ENCODE measurements at regions of chr1 and their contacts with region 1.

Region 1: GRCh38 chr1:226062558-226063223 is at the start of gene H3-3A:
- DNase-seq: peak; percentile 90
- ATAC-seq: peak; percentile 88
- H3K4me3 ChIP-seq: peak within 1 kb of the TSS; percentile 95
- H3K27ac ChIP-seq: peak within 1 kb of the TSS; percentile 97
- H3K4me1 ChIP-seq: peaks cover 2% of the 10 kb centered on the region
- H3K27me3 ChIP-seq: no peaks in the 10 kb centered on the region
- CTCF ChIP-seq: no peak
- POLR2A ChIP-seq: peak; percentile 92
- RAD21 ChIP-seq: no peak
- total RNA-seq, gene H3-3A: 171 and 188 TPM in 2 replicates

Region 2: DNA sequence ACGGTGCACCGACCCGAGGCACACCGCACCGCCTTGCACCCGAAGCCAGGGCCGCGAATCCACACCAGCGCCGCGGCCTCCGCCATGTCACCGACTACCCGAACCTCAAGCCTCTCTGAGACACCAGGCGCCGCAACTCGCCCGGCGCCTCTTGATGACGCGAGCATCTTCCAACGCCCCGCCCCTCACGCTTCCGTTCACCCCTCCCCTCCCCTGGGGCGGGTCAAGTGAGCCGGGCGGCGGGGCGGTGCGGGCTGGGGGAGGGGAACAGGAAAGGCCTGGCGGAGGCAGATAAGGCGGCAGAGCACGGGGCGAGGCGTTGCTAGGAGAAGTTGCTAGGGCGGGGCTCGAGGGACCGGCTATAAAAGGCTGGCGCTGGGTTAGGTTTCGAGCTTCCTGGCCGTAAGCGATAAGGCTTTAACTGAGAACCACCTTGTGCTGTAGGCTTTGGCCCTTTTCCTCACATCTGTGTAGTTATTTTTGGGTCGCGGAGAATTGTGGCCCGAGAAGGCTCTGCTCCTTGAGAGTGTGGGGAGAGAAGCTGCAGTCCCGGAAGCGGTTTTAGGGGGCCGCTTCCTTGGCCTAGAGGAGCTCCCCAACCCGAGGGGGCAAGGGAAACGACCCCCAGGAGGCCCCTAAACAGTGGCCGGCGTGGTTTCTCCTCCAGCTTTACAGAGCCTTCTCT is 63.3 kb before region 1 on chr1 and contains the start of gene SDE2:
- CTCF ChIA-PET with region 1: interaction called, 6 read pairs
- POLR2A ChIA-PET with region 1: no interaction called
- dilution Hi-C with region 1: no loop called
- in situ Hi-C with region 1: no loop called
- intact Hi-C with region 1: loop called (anchors 2 kb)
- DNase-seq: peak; percentile 98
- ATAC-seq: peak; percentile 100
- H3K4me3 ChIP-seq: peak within 1 kb of the TSS; percentile 92
- H3K27ac ChIP-seq: peak within 1 kb of the TSS; percentile 93
- H3K4me1 ChIP-seq: peaks cover 7% of the 10 kb centered on the region; the same call in 1 of the 2 replicates
- H3K27me3 ChIP-seq: no peaks in the 10 kb centered on the region
- CTCF ChIP-seq: no peak
- POLR2A ChIP-seq: peak; percentile 97
- RAD21 ChIP-seq: no peak
- total RNA-seq, gene SDE2: 14.7 and 29.4 TPM in 2 replicates

Region 3: GRCh38 chr1:226083302-226084101 is 20.8 kb after region 1 on chr1:
- CTCF ChIA-PET with region 1: interaction called, 8 read pairs
- POLR2A ChIA-PET with region 1: interaction called, 20 read pairs
- dilution Hi-C with region 1: no loop called
- in situ Hi-C with region 1: no loop called
- intact Hi-C with region 1: no loop called
- DNase-seq: peak; percentile 60
- ATAC-seq: peak; percentile 97
- H3K4me3 ChIP-seq: peak overlapping the region; percentile 66
- H3K27ac ChIP-seq: peak overlapping the region; percentile 53
- H3K4me1 ChIP-seq: no peaks in the 10 kb centered on the region
- H3K27me3 ChIP-seq: no peaks in the 10 kb centered on the region
- CTCF ChIP-seq: no peak
- POLR2A ChIP-seq: no peak
- RAD21 ChIP-seq: no peak

Region 4: GRCh38 chr1:226109829-226110248 is 47.1 kb after region 1 on chr1:
- CTCF ChIA-PET with region 1: interaction called, 9 read pairs
- POLR2A ChIA-PET with region 1: no interaction called
- dilution Hi-C with region 1: no loop called
- in situ Hi-C with region 1: no loop called
- intact Hi-C with region 1: loop called (anchors 2 kb)
- DNase-seq: peak; percentile 70
- ATAC-seq: peak; percentile 93
- H3K4me3 ChIP-seq: peak overlapping the region; percentile 57
- H3K27ac ChIP-seq: peak overlapping the region; percentile 69
- H3K4me1 ChIP-seq: peaks cover 4% of the 10 kb centered on the region; the same call in 1 of the 2 replicates
- H3K27me3 ChIP-seq: no peaks in the 10 kb centered on the region
- CTCF ChIP-seq: no peak
- POLR2A ChIP-seq: no peak
- RAD21 ChIP-seq: no peak

Region 5: DNA sequence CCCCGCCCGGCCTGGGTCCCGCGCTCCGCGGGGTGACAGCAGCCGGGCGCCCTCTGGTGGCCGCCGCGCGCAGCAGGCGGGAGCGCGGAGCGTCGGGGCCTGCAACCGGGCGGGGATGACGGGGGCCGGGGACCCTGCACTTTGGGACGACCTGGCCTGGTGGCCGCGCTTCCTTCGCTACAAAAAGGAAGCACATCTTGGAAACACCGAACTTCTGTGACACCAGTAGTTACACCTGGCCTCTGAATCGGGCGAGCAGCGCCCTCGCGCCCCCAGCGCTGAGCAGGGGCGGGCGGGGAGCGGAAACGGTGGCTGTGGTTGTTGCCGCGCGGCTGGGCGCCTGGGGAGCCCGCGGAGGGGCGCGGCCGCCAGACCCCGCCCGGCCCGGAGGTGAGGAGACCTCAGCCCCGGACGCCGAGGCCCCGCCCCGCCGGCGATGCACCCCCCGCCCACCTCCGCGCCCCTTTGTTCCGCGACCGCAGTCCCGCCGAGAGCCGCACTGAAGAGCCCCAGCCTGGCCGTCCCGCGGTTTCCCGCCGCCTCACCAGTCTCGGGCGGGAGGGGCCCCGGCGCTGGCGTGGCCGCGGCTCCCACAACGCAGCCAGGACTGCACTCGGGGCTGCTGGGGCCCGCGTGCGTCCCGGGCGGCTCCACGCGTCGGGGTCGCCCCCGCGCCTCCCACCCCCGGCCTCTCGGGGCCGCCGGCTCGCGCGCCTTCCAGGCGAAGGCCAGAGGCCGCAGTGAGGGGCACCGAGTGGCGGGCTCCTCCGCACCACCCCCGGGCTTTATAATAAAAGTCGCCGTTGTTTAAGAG is 59.1 kb after region 1 on chr1:
- CTCF ChIA-PET with region 1: interaction called, 13 read pairs
- POLR2A ChIA-PET with region 1: no interaction called
- dilution Hi-C with region 1: no loop called
- in situ Hi-C with region 1: no loop called
- intact Hi-C with region 1: loop called (anchors 1 kb)
- DNase-seq: peak; percentile 26
- ATAC-seq: peak; percentile 88
- H3K4me3 ChIP-seq: peak overlapping the region; percentile 66
- H3K27ac ChIP-seq: peak overlapping the region; percentile 46; the same call in 1 of the 2 replicates
- H3K4me1 ChIP-seq: peaks cover 2% of the 10 kb centered on the region; the same call in 1 of the 2 replicates
- H3K27me3 ChIP-seq: peaks cover 3% of the 10 kb centered on the region; the same call in 1 of the 2 replicates
- CTCF ChIP-seq: peak; percentile 78
- POLR2A ChIP-seq: no peak
- RAD21 ChIP-seq: peak; percentile 66

Region 6: GRCh38 chr1:226195144-226195543 is 132.5 kb after region 1 on chr1:
- CTCF ChIA-PET with region 1: interaction called, 7 read pairs
- POLR2A ChIA-PET with region 1: no interaction called
- dilution Hi-C with region 1: no loop called
- in situ Hi-C with region 1: no loop called
- intact Hi-C with region 1: loop called (anchors 5 kb)
- DNase-seq: no peak
- ATAC-seq: no peak
- H3K4me3 ChIP-seq: no peak overlapping the region
- H3K27ac ChIP-seq: no peak overlapping the region
- H3K4me1 ChIP-seq: no peaks in the 10 kb centered on the region
- H3K27me3 ChIP-seq: peaks cover 1% of the 10 kb centered on the region; the same call in 1 of the 2 replicates
- CTCF ChIP-seq: no peak
- POLR2A ChIP-seq: no peak
- RAD21 ChIP-seq: no peak

Region 7: GRCh38 chr1:226325178-226325577 is 262.5 kb after region 1 on chr1:
- CTCF ChIA-PET with region 1: no interaction called
- POLR2A ChIA-PET with region 1: no interaction called
- dilution Hi-C with region 1: no loop called
- in situ Hi-C with region 1: no loop called
- intact Hi-C with region 1: no loop called
- DNase-seq: no peak
- ATAC-seq: no peak
- H3K4me3 ChIP-seq: no peak overlapping the region
- H3K27ac ChIP-seq: no peak overlapping the region
- H3K4me1 ChIP-seq: no peaks in the 10 kb centered on the region
- H3K27me3 ChIP-seq: peaks cover 3% of the 10 kb centered on the region; the same call in 1 of the 2 replicates
- CTCF ChIP-seq: no peak
- POLR2A ChIP-seq: no peak
- RAD21 ChIP-seq: no peak

Measured in IMR-90 (cell line).